Common myeloid progenitor, CD34-positive (primary cell): ENCODE measurements at regions of chrX and their contacts with region 1.

Region 1: DNA sequence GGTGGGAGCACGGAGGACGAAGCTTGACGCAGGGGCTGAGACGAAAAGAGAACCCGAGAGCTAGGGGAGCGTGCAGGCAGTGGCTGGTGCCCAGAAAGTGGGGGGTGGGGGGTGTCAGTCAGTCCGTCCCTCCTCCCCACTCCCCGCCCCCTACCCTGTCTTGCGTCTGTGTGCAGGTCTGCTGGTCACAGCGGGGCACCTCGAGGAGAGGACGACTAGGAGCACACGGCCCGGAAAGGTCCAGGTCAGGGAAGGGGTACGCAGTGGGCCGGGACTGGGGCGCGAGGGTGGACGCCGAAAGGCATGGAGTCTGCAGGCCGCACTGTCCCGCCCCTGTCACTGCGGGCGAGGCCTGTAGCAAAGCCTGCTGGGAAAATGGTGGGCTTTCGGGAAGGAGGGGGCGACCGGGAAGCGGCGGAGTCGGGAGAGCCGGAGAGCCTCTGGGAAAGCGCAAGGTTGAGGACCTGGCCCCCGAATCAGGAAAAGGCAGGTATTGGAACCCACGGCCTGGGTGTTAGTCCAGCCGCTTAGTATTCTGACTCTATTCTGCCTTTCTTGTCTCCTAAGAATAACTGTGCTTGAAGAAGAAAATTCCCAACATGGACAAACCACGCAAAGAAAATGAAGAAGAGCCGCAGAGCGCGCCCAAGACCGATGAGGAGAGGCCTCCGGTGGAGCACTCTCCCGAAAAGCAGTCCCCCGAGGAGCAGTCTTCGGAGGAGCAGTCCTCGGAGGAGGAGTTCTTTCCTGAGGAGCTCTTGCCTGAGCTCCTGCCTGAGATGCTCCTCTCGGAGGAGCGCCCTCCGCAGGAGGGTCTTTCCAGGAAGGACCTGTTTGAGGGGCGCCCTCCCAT is 769 bp downstream of the TCEAL1 start:
- DNase-seq: peak; percentile 66 to 78 (median 75)
- H3K4me3 ChIP-seq: peak overlapping the region; percentile 67 to 87 (median 72)
- H3K27ac ChIP-seq: peak overlapping the region; percentile 61 to 83
- H3K4me1 ChIP-seq: peaks cover 0 to 12% (median 1%) of the 10 kb centered on the region in 4 experiments
- H3K27me3 ChIP-seq: peaks cover 0 to 30% (median 0%) of the 10 kb centered on the region in 5 experiments

Region 2: GRCh38 chrX:103614992-103615391 is 14.6 kb before region 1 on chrX:
- CTCF ChIA-PET with region 1: interaction called, 12 read pairs
- POLR2A ChIA-PET with region 1: no interaction called
- DNase-seq: no peak
- H3K4me3 ChIP-seq: no peak overlapping the region
- H3K27ac ChIP-seq: no peak overlapping the region
- H3K4me1 ChIP-seq: no peaks in the 10 kb centered on the region
- H3K27me3 ChIP-seq: no peaks in the 10 kb centered on the region